ENCODE measurements at regions of chr1 and their contacts with region 1.

Region 1: DNA sequence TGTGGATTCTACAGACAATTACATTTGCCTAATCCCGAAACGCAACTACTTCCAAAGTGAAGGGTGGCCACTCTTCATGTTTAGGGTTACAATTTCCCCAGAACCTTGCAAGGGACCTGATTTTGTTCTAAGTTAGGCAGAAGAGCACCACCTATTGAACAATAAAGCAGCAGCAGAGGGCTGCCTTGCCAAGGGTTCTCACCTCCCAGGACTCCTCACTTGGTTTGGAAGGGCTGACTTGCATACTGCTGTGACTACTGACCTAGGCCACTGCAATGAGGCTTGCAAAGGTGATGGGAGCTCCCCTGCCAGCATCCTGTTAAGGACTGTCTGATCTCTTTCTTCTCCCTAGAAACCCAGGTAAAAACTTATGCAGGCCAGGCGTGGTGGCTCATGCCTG is 14.2 kb downstream of the MTOR start:
- DNase-seq: no peak
- ATAC-seq: no peak
- H3K4me3 Mint-ChIP-seq: no peak overlapping the region
- H3K27ac Mint-ChIP-seq: no peak overlapping the region
- H3K4me1 Mint-ChIP-seq: no peaks in the 10 kb centered on the region
- H3K27me3 Mint-ChIP-seq: no peaks in the 10 kb centered on the region
- CTCF ChIP-seq: no peak

Region 2: GRCh38 chr1:11227106-11228077 is 20.8 kb before region 1 on chr1:
- CTCF ChIA-PET with region 1: interaction called, 29 read pairs
- POLR2A ChIA-PET with region 1: no interaction called
- intact Hi-C with region 1: no loop called
- DNase-seq: no peak
- ATAC-seq: peak; percentile 47
- H3K4me3 Mint-ChIP-seq: no peak overlapping the region
- H3K27ac Mint-ChIP-seq: peak overlapping the region; percentile 72
- H3K4me1 Mint-ChIP-seq: peaks cover 8% of the 10 kb centered on the region
- H3K27me3 Mint-ChIP-seq: no peaks in the 10 kb centered on the region
- CTCF ChIP-seq: no peak

Region 3: DNA sequence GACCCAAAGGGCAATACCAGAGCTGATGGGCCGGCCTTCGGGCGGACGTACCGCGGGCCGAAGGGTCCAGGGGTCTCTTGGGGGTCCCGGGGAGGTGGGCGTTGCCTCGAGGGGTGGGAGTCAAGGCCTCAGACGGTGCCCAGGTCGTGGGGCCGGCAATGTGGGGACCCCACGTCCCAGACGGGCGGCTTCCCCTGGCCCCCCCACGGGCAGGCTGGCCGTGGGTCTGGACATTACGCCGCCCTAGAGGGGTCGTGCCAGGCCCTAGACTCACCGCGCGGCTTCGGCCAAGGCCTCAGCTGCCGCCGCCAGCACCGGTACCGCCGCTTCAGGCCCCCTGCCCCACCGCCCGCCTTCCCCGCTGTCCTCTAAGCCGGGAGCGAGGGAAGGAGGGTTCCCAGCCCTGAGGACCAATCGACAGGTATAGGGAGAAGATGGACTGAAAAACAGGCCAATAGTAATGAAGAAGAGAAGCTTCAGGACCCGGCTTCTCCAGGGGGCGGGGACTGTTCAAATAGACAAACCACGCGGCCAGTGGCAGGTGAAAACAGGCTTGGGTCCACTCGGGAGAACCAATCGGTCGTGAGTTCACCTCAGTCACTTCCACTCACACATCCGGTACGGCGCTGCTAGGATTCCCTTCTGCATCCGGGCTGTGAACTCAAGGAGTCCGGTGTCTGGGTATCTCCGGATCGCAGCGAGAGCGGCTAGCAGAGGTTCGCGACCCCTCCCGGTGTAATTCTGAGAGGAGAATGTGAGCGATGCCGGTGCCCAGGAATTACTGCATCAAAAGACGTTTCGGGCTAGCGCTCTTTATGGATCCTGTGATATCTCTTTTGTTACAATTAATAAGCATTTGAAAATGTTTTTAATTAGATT is 14.3 kb after region 1 on chr1 and contains the start of gene MTOR:
- CTCF ChIA-PET with region 1: no interaction called
- POLR2A ChIA-PET with region 1: interaction called, 11 read pairs
- intact Hi-C with region 1: no loop called
- DNase-seq: peak; percentile 99
- ATAC-seq: peak; percentile 98
- H3K4me3 Mint-ChIP-seq: peak within 1 kb of the TSS; percentile 84
- H3K27ac Mint-ChIP-seq: peak within 1 kb of the TSS; percentile 88
- H3K4me1 Mint-ChIP-seq: peaks cover 13% of the 10 kb centered on the region
- H3K27me3 Mint-ChIP-seq: peaks cover 1% of the 10 kb centered on the region
- CTCF ChIP-seq: peak; percentile 29
- total RNA-seq, gene MTOR: 34.7 to 36.8 TPM